ENCODE measurements at regions of chr7 and their contacts with region 1.

Region 1: GRCh38 chr7:115008465-115009114 is 86.7 kb downstream of the MDFIC start:
- DNase-seq: peak; percentile 93
- H3K4me3 ChIP-seq: peak overlapping the region in 1 of 4 donors; percentile 4
- H3K27ac ChIP-seq: peak overlapping the region; percentile 56 to 68 (median 64)
- H3K4me1 ChIP-seq: peaks cover 25 to 46% (median 39%) of the 10 kb centered on the region in 4 donors
- H3K27me3 ChIP-seq: no peaks in the 10 kb centered on the region
- CTCF ChIP-seq: no peak
- EP300 ChIP-seq: no peak
- POLR2A ChIP-seq: no peak

Region 2: GRCh38 chr7:114715907-114716306 is 292.7 kb before region 1 on chr7:
- intact Hi-C with region 1: no loop called
- DNase-seq: no peak
- H3K4me3 ChIP-seq: no peak overlapping the region
- H3K27ac ChIP-seq: no peak overlapping the region
- H3K4me1 ChIP-seq: no peaks in the 10 kb centered on the region
- H3K27me3 ChIP-seq: no peaks in the 10 kb centered on the region
- CTCF ChIP-seq: no peak
- EP300 ChIP-seq: no peak
- POLR2A ChIP-seq: no peak

Region 3: DNA sequence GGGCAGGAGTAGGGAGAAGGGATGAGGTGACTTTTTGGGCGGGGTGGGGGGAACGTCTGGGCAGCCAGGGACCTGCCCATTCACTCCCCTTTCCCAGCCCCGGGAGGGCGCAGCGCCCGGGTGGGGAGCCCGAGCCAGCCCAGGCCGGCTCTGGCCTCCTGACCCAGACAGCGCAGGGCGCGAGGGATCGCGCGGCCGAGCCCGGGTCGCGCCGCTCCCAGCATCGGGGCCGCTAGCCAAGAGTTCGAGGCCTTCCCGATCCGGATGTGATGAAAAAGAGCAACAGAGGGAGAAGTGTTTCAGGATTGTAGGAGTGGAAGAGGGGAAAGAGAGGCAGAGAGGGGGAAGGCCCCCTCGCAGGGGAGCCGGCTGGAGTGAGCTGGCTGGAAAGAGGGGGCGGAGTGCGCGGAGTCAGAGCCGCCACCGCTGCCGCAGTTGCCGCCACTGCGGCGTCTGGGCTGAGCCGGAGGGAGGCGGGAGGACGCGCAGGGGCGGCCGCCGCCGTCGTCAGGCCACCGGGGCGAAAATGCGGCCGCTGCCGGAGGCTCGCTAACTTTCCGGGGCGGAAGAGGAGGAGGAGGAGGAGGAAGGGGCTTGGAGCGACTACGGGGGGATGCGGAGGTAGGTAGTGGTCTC is 86.5 kb before region 1 on chr7 and contains the start of gene MDFIC:
- intact Hi-C with region 1: loop called (anchors 5 kb)
- DNase-seq: no peak
- H3K4me3 ChIP-seq: peak within 1 kb of the TSS; percentile 75 to 91 (median 88)
- H3K27ac ChIP-seq: peak within 1 kb of the TSS; percentile 86 to 96 (median 94)
- H3K4me1 ChIP-seq: peaks cover 14 to 44% (median 43%) of the 10 kb centered on the region in 4 donors
- H3K27me3 ChIP-seq: no peaks in the 10 kb centered on the region
- CTCF ChIP-seq: no peak
- EP300 ChIP-seq: no peak
- POLR2A ChIP-seq: no peak
- total RNA-seq, gene MDFIC: 34.5 to 71.3 (median 36.5) TPM

Measured in esophagus muscularis mucosa (tissue), 4 donors.